ENCODE measurements at regions of chr16 and their contacts with region 1.

Region 1: DNA sequence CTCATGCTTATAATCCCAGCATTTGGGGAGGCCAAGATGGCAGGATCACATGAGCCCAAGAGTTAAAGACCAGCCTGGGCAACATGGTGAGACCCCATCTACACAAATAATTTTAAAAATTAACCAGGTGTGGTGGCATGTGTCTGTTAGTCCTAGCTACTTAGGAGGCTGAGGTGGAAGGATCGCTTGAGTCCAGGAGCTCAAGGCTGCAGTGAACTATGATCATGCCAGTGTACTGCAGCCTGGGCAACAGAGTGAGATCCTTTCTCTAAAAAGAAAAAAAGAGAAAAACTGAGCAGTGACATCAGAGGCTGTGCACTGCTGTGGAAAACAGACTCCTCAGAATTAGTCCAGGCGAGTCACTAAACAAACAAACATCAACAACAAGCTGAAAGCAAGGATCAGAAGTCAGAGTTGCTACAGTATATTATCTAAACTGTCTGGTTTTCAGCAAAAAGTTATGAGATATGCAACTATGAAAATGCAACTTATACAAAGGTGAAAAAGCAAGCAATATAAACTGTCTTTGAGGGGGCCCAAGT is 39.3 kb downstream of the CBFB start:
- DNase-seq: no peak
- H3K4me3 ChIP-seq: no peak overlapping the region
- H3K27ac ChIP-seq: no peak overlapping the region
- H3K4me1 ChIP-seq: no peaks in the 10 kb centered on the region
- H3K27me3 ChIP-seq: no peaks in the 10 kb centered on the region
- CTCF ChIP-seq: no peak

Region 2: DNA sequence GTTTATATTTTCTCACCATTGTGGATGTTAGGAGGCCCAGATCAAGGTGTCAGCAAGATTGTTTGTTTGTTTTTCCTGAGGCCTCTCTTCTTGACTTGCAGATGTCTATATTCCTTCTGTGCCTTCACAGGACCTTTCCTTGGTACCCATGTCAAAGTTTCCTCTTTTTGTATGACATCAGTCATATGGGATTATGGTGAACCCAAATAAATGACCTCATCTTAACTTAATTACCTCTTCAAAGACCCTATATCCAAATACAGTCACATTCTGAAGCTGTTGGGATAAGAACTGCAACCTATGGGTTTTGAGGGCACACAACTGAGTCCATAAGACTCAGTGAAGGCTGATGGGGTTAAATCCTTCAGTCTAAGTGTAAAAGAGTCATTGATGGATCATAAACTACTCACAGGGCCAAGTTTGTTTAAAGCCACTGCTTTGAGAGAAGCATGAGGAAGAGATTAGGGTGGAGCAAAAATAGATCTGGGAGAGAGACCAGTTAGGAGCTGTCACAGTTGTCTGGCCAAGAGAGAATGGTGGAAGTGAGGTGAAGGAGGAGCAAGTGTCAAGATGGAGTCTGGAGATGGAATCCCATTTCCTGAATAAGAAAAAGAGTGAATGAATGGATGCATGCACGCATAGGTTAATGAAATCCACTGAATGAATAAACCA is 1567.5 kb before region 1 on chr16:
- CTCF ChIA-PET with region 1: no interaction called
- POLR2A ChIA-PET with region 1: interaction called, 14 read pairs
- intact Hi-C with region 1: no loop called
- DNase-seq: no peak
- H3K4me3 ChIP-seq: no peak overlapping the region
- H3K27ac ChIP-seq: no peak overlapping the region
- H3K4me1 ChIP-seq: peaks cover 4% of the 10 kb centered on the region
- H3K27me3 ChIP-seq: no peaks in the 10 kb centered on the region
- CTCF ChIP-seq: no peak

Region 3: GRCh38 chr16:66539623-66540469 is 528.4 kb before region 1 on chr16:
- CTCF ChIA-PET with region 1: no interaction called
- POLR2A ChIA-PET with region 1: no interaction called
- intact Hi-C with region 1: no loop called
- DNase-seq: no peak
- H3K4me3 ChIP-seq: no peak overlapping the region
- H3K27ac ChIP-seq: no peak overlapping the region
- H3K4me1 ChIP-seq: no peaks in the 10 kb centered on the region
- H3K27me3 ChIP-seq: no peaks in the 10 kb centered on the region
- CTCF ChIP-seq: no peak

Region 4: DNA sequence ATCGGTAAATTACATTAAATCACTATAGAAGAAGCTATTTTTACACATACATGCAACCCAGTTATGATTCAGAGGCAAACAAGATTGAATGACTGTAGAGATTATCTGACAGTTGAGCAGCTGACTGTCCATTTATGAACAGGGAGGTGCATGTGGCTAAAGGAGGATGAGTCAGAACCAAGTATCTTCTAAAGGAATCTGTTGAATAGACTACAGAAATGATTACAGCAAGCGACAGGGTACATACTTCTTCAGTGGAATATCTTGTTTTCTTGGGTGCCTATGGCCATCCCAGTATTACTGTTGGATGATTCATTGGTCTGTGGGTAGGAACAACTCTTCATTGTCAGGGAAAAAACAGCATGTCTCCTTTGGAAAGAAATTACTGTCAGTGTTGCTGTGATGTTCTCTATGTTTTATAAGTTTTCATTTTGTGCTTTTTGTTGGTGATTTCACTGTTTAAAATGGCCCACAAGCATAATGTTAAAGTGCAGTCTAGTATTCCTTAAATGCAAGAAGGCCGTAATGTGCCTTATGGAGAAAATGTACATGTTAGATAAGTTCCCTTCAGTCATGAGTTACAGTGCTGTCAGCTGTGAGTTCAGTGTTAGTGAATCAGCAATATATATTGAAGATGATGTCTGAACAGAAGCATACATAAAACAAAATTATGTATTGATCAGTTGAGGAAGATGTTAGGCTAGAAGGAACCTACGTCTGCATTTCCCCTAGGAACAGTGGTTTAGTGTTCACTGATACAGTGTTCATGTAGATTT is 12.4 kb before region 1 on chr16:
- CTCF ChIA-PET with region 1: no interaction called
- POLR2A ChIA-PET with region 1: no interaction called
- intact Hi-C with region 1: loop called (anchors 2 kb)
- DNase-seq: peak; percentile 47
- H3K4me3 ChIP-seq: no peak overlapping the region
- H3K27ac ChIP-seq: no peak overlapping the region
- H3K4me1 ChIP-seq: no peaks in the 10 kb centered on the region
- H3K27me3 ChIP-seq: no peaks in the 10 kb centered on the region
- CTCF ChIP-seq: no peak